ENCODE measurements at regions of chr17 and their contacts with region 1.

Region 1: DNA sequence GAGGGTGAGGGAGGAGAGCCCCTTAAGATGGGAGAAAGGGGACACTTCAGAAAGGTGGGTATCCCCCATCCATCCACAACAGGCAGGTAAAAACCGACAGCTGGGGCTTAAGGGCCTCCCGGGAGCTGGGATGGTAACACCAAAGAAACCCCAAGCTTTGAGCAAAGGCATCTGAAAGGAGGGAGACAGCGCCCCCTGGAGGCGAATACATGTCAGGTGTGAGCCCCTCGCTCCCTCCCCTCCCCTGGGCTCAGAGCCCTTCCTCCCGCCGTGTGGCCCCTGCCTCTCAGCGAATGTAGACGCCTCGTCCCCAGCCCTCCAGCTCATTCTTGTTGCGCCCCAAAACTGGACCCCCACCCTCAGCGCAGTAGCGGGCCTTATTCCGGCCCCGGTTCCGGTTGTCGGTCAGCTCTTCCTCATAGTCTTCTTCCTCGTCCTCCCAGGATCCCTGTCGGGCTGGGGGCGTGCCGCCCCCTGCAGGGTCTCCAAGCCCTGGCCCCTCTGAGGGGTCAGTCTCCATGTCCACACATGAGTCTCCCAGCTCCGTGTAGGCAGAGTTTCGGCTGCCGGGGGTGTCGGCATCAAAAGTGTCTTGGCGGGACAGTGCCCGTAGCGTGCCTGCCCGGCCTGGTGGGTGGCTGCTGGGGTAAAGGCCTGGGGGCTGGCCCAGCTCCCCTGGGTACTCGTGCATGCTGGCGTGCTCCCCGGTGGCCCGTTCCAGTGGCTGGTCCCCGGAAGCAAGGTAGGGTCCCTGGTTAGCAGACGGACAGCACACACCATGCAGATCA is 9.1 kb upstream of the ARL5C start:
- DNase-seq: peak; percentile 68 to 73 (median 72)
- H3K4me3 ChIP-seq: no peak overlapping the region
- H3K4me3 Mint-ChIP-seq: no peak overlapping the region
- H3K27ac ChIP-seq: no peak overlapping the region
- H3K27ac Mint-ChIP-seq: peak overlapping the region in 6 of 7 donors; percentile 23 to 84 (median 67)
- H3K4me1 ChIP-seq: no peaks in the 10 kb centered on the region
- H3K4me1 Mint-ChIP-seq: peaks cover 5 to 24% (median 10%) of the 10 kb centered on the region in 4 donors
- H3K27me3 ChIP-seq: no peaks in the 10 kb centered on the region
- H3K27me3 Mint-ChIP-seq: no peaks in the 10 kb centered on the region

Region 2: GRCh38 chr17:38857256-38857655 is 317.8 kb before region 1 on chr17:
- CTCF ChIA-PET with region 1: no interaction called
- POLR2A ChIA-PET with region 1: no interaction called
- intact Hi-C with region 1: no loop called
- DNase-seq: no peak
- H3K4me3 ChIP-seq: no peak overlapping the region
- H3K4me3 Mint-ChIP-seq: no peak overlapping the region
- H3K27ac ChIP-seq: no peak overlapping the region
- H3K27ac Mint-ChIP-seq: no peak overlapping the region
- H3K4me1 ChIP-seq: peaks cover 16% of the 10 kb centered on the region
- H3K4me1 Mint-ChIP-seq: peaks cover 14 to 24% (median 20%) of the 10 kb centered on the region in 4 donors
- H3K27me3 ChIP-seq: no peaks in the 10 kb centered on the region
- H3K27me3 Mint-ChIP-seq: no peaks in the 10 kb centered on the region

Region 3: DNA sequence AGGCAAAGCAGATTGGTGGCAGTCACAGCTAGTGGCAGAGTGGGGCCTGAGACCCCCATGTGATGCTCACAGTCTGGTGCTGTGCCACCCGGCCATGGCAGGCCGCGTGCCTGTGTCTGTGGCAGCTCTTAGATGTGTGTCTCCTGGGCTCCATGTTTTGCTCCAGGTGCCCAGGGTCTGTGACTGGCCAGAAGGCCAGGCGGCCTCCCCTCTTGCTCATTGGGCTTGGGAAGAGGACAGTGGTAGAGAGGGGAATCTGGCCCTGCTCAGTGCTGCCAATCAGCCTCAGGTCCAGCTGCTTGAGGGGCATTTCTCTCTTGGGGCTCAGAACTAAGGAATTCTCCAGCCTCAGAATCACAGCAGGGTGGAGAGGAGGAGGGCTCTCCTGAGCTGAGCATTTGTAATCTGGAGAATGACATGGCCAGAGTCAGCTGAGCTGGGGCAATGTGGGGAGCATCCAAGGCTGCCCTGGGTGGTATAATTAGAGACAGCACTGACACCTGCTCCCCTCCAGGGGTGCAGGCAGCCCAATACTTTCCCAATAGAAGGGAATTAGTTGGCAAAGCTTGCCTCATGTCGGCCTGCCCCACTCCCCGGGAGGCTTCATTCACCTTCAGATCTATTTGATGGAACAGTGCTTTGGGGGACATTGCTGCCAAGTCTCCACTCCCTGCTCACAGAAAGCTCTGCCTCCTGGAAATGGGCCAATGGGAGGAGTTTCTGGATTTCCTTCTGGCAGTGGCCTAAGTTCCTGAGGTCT is 252.4 kb before region 1 on chr17:
- CTCF ChIA-PET with region 1: interaction called, 14 read pairs
- POLR2A ChIA-PET with region 1: no interaction called
- intact Hi-C with region 1: no loop called
- DNase-seq: no peak
- H3K4me3 ChIP-seq: no peak overlapping the region
- H3K4me3 Mint-ChIP-seq: no peak overlapping the region
- H3K27ac ChIP-seq: no peak overlapping the region
- H3K27ac Mint-ChIP-seq: peak overlapping the region in 1 of 7 donors; percentile 17
- H3K4me1 ChIP-seq: peaks cover 19% of the 10 kb centered on the region
- H3K4me1 Mint-ChIP-seq: peaks cover 24 to 32% (median 29%) of the 10 kb centered on the region in 4 donors
- H3K27me3 ChIP-seq: no peaks in the 10 kb centered on the region
- H3K27me3 Mint-ChIP-seq: no peaks in the 10 kb centered on the region

Region 4: GRCh38 chr17:39069114-39069756 is 105.9 kb before region 1 on chr17:
- CTCF ChIA-PET with region 1: interaction called, 13 read pairs
- POLR2A ChIA-PET with region 1: interaction called, 3 read pairs
- intact Hi-C with region 1: loop called (anchors 1 kb)
- DNase-seq: peak in 4 of 5 donors; percentile 44 to 55 (median 52)
- H3K4me3 ChIP-seq: no peak overlapping the region
- H3K4me3 Mint-ChIP-seq: peak overlapping the region in 1 of 8 donors; percentile 3
- H3K27ac ChIP-seq: no peak overlapping the region
- H3K27ac Mint-ChIP-seq: peak overlapping the region in 4 of 7 donors; percentile 41 to 75 (median 54)
- H3K4me1 ChIP-seq: no peaks in the 10 kb centered on the region
- H3K4me1 Mint-ChIP-seq: peaks cover 4 to 9% (median 5%) of the 10 kb centered on the region in 4 donors
- H3K27me3 ChIP-seq: no peaks in the 10 kb centered on the region
- H3K27me3 Mint-ChIP-seq: peaks cover 0 to 2% of the 10 kb centered on the region in 2 donors

Region 5: DNA sequence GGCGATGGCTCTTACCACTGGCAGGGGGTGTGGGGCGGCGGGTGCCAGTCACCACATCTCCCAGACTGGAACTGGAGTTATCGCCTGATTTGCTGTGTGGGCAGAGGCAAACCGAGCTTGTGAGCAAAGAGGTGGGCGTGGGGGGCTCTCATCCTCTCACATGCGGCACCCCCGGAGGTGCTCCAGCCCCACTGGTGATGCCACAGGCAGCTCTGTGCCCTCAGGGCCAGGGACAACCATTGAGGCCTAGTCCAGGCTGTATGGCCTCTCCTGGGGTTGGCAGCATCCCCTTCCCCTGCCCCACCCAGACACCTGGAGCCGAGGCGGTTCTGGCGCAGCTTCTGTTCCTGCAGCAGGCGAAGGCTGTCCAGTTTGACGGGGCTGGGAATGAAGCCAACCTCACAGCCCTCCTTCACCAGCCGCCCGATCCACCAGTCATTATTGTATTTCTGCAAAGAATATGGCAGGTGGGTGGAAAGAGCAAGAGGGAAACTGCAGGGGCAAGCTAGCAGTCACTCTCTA is 11.4 kb after region 1 on chr17:
- CTCF ChIA-PET with region 1: interaction called, 26 read pairs
- POLR2A ChIA-PET with region 1: interaction called, 4 read pairs
- intact Hi-C with region 1: no loop called
- DNase-seq: no peak
- H3K4me3 ChIP-seq: no peak overlapping the region
- H3K4me3 Mint-ChIP-seq: no peak overlapping the region
- H3K27ac ChIP-seq: no peak overlapping the region
- H3K27ac Mint-ChIP-seq: no peak overlapping the region
- H3K4me1 ChIP-seq: no peaks in the 10 kb centered on the region
- H3K4me1 Mint-ChIP-seq: no peaks in the 10 kb centered on the region
- H3K27me3 ChIP-seq: no peaks in the 10 kb centered on the region
- H3K27me3 Mint-ChIP-seq: no peaks in the 10 kb centered on the region

Region 6: DNA sequence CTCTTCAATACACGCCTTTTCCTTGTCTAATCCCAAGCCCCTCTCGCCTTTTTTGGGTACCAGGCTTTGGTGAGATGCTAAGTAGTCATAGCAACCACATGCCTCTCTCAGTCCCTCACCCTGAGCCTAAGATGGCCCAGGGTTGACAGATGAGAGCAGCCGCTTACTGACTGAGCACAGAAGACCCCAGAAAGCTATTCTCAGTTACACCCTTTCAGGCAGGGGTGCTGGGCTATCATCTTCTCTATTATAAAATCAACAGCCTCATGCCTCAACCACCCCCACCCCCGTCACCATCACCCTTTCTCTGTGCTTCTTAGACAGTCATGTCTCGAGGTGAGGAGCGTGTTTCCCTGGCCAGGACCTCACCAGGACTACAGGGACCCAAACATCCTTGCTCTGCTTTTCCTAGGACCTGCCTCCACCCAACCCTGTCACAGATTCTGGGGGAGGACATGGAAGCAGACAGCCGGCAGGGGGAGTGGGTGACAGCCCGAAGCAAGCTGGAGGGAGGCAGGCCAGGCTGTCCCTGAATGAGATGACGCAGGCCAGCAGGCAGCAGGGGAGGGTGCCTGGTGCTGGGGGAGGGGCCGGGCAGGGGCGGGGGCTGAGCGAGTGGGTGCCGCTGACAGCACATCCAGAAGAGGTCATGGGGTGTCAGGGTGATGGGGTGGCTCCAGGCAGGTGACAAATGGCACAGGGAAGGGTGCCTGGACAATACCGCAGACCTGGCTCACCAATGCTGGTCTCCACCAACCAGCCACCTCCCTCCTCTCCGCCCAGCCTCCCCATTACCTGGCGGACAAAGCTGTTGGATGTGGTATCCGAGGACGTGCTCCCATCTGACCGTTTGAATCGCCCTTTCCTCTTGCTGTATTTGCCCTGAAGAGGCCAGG is 19.2 kb after region 1 on chr17:
- CTCF ChIA-PET with region 1: interaction called, 26 read pairs
- POLR2A ChIA-PET with region 1: interaction called, 4 read pairs
- intact Hi-C with region 1: no loop called
- DNase-seq: no peak
- H3K4me3 ChIP-seq: no peak overlapping the region
- H3K4me3 Mint-ChIP-seq: peak overlapping the region in 2 of 8 donors; percentile 28 to 39
- H3K27ac ChIP-seq: no peak overlapping the region
- H3K27ac Mint-ChIP-seq: peak overlapping the region in 6 of 7 donors; percentile 35 to 80 (median 63)
- H3K4me1 ChIP-seq: peaks cover 31% of the 10 kb centered on the region
- H3K4me1 Mint-ChIP-seq: peaks cover 25 to 56% (median 36%) of the 10 kb centered on the region in 4 donors
- H3K27me3 ChIP-seq: no peaks in the 10 kb centered on the region
- H3K27me3 Mint-ChIP-seq: no peaks in the 10 kb centered on the region

Region 7: GRCh38 chr17:39244600-39245570 is 69.8 kb after region 1 on chr17:
- CTCF ChIA-PET with region 1: interaction called, 16 read pairs
- POLR2A ChIA-PET with region 1: no interaction called
- intact Hi-C with region 1: no loop called
- DNase-seq: peak; percentile 74 to 83 (median 78)
- H3K4me3 ChIP-seq: no peak overlapping the region
- H3K4me3 Mint-ChIP-seq: peak overlapping the region in 1 of 8 donors; percentile 57
- H3K27ac ChIP-seq: no peak overlapping the region
- H3K27ac Mint-ChIP-seq: peak overlapping the region in 5 of 7 donors; percentile 6 to 92 (median 44)
- H3K4me1 ChIP-seq: peaks cover 11% of the 10 kb centered on the region
- H3K4me1 Mint-ChIP-seq: peaks cover 5 to 14% (median 9%) of the 10 kb centered on the region in 4 donors
- H3K27me3 ChIP-seq: no peaks in the 10 kb centered on the region
- H3K27me3 Mint-ChIP-seq: peaks cover 2% of the 10 kb centered on the region in 2 donors